Activated B cell treated with CpG ODN at 0.5 μM for 24 hours (primary cell): ENCODE measurements at regions of chr1 and their contacts with region 1.

Region 1: DNA sequence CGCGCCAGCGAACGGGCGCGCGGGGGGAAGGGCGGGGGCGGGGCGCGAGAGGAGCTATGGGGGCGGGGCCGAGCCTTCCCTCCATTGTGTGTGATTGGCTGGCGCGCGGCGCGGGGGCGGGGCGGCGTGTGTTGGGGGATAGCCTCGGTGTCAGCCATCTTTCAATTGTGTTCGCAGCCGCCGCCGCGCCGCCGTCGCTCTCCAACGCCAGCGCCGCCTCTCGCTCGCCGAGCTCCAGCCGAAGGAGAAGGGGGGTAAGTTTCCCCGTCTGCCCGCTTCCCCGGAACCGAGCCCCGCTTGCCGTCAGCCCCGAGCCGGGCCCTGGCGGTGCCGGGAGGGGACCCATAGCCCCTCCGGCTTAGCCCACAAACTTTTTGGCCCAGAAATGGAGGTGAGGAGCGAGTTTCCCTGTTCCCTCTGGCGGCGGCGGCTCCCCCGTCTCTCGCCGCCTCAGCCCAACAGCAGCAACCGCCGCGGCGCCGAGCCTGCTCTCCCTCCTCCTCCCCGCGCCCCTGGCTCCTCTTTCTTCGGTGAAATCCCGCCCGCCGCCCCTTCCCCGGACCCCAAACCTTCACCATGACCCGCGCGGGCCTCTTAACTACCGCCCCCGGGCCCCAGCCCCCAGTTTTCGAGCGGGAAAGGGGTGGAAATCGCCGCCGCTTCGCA is at the start of gene H3-3A:
- DNase-seq: peak; percentile 96
- ATAC-seq: peak; percentile 79
- H3K4me3 Mint-ChIP-seq: peak within 1 kb of the TSS; percentile 100
- H3K27ac Mint-ChIP-seq: peak within 1 kb of the TSS; percentile 99
- H3K4me1 Mint-ChIP-seq: peaks cover 44% of the 10 kb centered on the region
- H3K27me3 Mint-ChIP-seq: no peaks in the 10 kb centered on the region
- CTCF ChIP-seq: no peak
- total RNA-seq, gene H3-3A: 600 and 642 TPM in 2 replicates

Region 2: GRCh38 chr1:225777583-225778336 is 284.9 kb before region 1 on chr1 and contains the start of gene SRP9:
- CTCF ChIA-PET with region 1: interaction called, 4 read pairs
- POLR2A ChIA-PET with region 1: interaction called, 11 read pairs
- intact Hi-C with region 1: loop called (anchors 5 kb)
- DNase-seq: peak; percentile 94
- ATAC-seq: peak; percentile 97
- H3K4me3 Mint-ChIP-seq: no peak within 1 kb of the TSS
- H3K27ac Mint-ChIP-seq: no peak within 1 kb of the TSS
- H3K4me1 Mint-ChIP-seq: peaks cover 37% of the 10 kb centered on the region
- H3K27me3 Mint-ChIP-seq: no peaks in the 10 kb centered on the region
- CTCF ChIP-seq: no peak
- total RNA-seq, gene SRP9: 141 and 143 TPM in 2 replicates

Region 3: GRCh38 chr1:225817611-225818061 is 245.1 kb before region 1 on chr1:
- CTCF ChIA-PET with region 1: no interaction called
- POLR2A ChIA-PET with region 1: no interaction called
- intact Hi-C with region 1: no loop called
- DNase-seq: no peak
- ATAC-seq: no peak
- H3K4me3 Mint-ChIP-seq: no peak overlapping the region
- H3K27ac Mint-ChIP-seq: no peak overlapping the region
- H3K4me1 Mint-ChIP-seq: no peaks in the 10 kb centered on the region
- H3K27me3 Mint-ChIP-seq: no peaks in the 10 kb centered on the region
- CTCF ChIP-seq: no peak

Region 4: GRCh38 chr1:225933072-225933471 is 129.6 kb before region 1 on chr1:
- CTCF ChIA-PET with region 1: no interaction called
- POLR2A ChIA-PET with region 1: no interaction called
- intact Hi-C with region 1: no loop called
- DNase-seq: no peak
- ATAC-seq: no peak
- H3K4me3 Mint-ChIP-seq: no peak overlapping the region
- H3K27ac Mint-ChIP-seq: no peak overlapping the region
- H3K4me1 Mint-ChIP-seq: no peaks in the 10 kb centered on the region
- H3K27me3 Mint-ChIP-seq: no peaks in the 10 kb centered on the region
- CTCF ChIP-seq: no peak

Region 5: DNA sequence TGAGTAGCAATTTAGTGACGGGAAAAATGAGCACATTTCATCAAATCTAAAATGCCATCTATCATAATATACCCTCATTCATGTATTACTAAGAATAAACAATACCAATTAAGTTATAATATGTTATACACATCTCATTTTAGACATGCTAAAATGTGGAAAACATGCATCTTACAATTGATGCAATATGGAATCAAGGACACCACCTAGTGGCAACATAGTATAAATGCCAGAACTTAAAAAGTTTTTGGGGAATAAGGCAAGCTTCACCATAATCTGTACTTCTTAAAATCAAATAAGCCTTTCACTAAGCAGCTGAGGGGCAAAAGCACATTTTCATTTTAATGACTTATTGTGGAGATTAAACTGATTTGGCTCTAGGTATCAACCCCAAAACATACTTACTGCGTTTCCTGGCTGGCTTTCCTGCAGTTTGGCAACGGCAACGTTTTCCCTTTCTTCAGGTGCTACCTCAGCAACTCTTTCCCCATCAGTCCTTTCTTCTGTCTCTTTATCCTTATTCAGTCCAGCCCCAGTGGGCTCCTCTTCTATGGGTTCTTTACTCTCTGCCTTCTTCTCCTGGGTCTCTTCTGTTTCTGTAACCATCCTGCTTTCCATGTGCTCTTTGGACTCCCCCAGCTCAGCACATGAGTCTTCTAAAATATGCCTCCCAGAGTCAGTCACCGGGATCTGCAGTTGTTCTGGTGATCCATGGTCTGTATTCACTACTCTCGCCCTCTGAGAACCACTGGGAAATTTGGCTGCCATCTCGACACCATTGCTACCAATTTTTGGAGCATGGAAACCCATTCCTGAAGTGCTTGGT is 75.0 kb before region 1 on chr1:
- CTCF ChIA-PET with region 1: interaction called, 41 read pairs
- POLR2A ChIA-PET with region 1: interaction called, 34 read pairs
- intact Hi-C with region 1: loop called (anchors 1 kb)
- DNase-seq: no peak
- ATAC-seq: peak; percentile 69
- H3K4me3 Mint-ChIP-seq: no peak overlapping the region
- H3K27ac Mint-ChIP-seq: peak overlapping the region; percentile 5
- H3K4me1 Mint-ChIP-seq: peaks cover 23% of the 10 kb centered on the region
- H3K27me3 Mint-ChIP-seq: no peaks in the 10 kb centered on the region
- CTCF ChIP-seq: peak; percentile 54

Region 6: DNA sequence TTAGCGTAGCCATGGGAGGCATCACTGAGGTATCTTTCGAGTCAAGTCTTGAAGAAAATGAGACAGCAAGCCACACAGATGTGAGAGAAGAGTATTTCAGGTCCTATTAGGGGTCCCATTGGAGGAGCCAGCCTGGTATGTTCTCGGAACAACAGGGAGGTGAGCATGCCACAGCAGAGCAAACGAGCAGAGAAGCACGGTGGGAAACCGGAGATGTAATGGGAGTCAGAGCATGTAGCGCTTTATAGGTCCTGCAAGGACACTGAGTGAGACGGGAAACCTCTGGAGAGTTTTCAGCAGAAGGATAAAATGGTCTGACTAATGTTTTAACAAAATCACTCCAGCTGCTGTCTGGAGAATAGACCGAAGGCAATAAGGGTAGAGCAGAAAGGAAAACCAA is 15.7 kb after region 1 on chr1:
- CTCF ChIA-PET with region 1: interaction called, 33 read pairs
- POLR2A ChIA-PET with region 1: interaction called, 40 read pairs
- intact Hi-C with region 1: loop called (anchors 1 kb)
- DNase-seq: no peak
- ATAC-seq: no peak
- H3K4me3 Mint-ChIP-seq: no peak overlapping the region
- H3K27ac Mint-ChIP-seq: no peak overlapping the region
- H3K4me1 Mint-ChIP-seq: peaks cover 10% of the 10 kb centered on the region
- H3K27me3 Mint-ChIP-seq: no peaks in the 10 kb centered on the region
- CTCF ChIP-seq: no peak

Region 7: GRCh38 chr1:226128487-226129075 is 65.9 kb after region 1 on chr1:
- CTCF ChIA-PET with region 1: interaction called, 28 read pairs
- POLR2A ChIA-PET with region 1: interaction called, 72 read pairs
- intact Hi-C with region 1: no loop called
- DNase-seq: no peak
- ATAC-seq: no peak
- H3K4me3 Mint-ChIP-seq: peak overlapping the region; percentile 41
- H3K27ac Mint-ChIP-seq: peak overlapping the region; percentile 99
- H3K4me1 Mint-ChIP-seq: peaks cover 96% of the 10 kb centered on the region
- H3K27me3 Mint-ChIP-seq: no peaks in the 10 kb centered on the region
- CTCF ChIP-seq: no peak

Region 8: GRCh38 chr1:226407497-226408284 is 345.0 kb after region 1 on chr1 and contains the start of gene PARP1:
- CTCF ChIA-PET with region 1: no interaction called
- POLR2A ChIA-PET with region 1: interaction called, 10 read pairs
- intact Hi-C with region 1: loop called (anchors 2 kb)
- DNase-seq: peak; percentile 95
- ATAC-seq: peak; percentile 83
- H3K4me3 Mint-ChIP-seq: peak within 1 kb of the TSS; percentile 98
- H3K27ac Mint-ChIP-seq: peak within 1 kb of the TSS; percentile 96
- H3K4me1 Mint-ChIP-seq: peaks cover 57% of the 10 kb centered on the region
- H3K27me3 Mint-ChIP-seq: no peaks in the 10 kb centered on the region
- CTCF ChIP-seq: peak; percentile 41
- total RNA-seq, gene PARP1: 232 and 260 TPM in 2 replicates